ENCODE measurements at regions of chr1 and their contacts with region 1.

Region 1: DNA sequence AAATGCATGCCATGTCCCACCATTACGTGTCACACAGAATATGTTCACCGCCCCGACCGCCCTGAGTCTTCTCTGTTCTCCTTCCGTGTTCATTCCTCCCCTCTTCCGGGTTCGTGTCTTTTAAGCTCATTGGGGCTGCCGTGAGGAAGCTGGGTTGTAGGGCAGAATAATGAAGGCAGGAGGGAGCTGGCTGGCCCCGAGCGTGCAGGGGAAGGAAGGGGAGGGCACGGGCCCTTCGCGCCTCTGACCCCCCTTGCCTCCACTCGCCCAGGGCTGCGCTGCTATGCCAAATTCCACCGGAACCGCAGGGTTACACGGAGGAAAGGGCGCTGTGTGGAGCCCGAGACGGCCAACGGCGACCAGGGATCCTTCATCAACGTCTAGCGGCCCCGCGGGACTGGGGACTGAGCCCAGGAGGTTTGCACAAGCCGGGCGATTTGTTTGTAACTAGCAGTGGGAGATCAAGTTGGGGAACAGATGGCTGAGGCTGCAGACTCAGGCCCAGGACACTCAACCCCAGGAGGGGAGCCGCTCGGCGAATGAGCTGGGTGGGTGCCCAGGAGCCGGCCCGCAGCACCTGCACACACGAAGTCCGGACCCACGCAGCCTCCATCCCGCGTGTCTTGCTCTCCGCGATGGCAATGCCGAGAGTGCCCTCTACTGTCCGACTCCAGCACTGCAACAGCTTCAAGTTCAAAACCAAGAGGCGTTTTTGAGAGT is 16.5 kb upstream of the AGTRAP start:
- DNase-seq: peak; percentile 84 to 89 (median 85)
- H3K4me3 ChIP-seq: peak overlapping the region; percentile 32 to 68 (median 45)
- H3K4me3 Mint-ChIP-seq: peak overlapping the region; percentile 81 to 89
- H3K27ac ChIP-seq: peak overlapping the region; percentile 76 to 84
- H3K27ac Mint-ChIP-seq: peak overlapping the region; percentile 91 to 96 (median 95)
- H3K4me1 ChIP-seq: peaks cover 33 to 41% of the 10 kb centered on the region in 2 donors
- H3K4me1 Mint-ChIP-seq: peaks cover 42% of the 10 kb centered on the region
- H3K27me3 ChIP-seq: no peaks in the 10 kb centered on the region
- H3K27me3 Mint-ChIP-seq: peaks cover 2 to 4% (median 4%) of the 10 kb centered on the region in 3 donors
- CTCF ChIP-seq: peak; percentile 98

Region 2: GRCh38 chr1:11661103-11661502 is 58.4 kb before region 1 on chr1:
- intact Hi-C with region 1: loop called in 1 of 2 experiments (anchors 5 kb)
- DNase-seq: no peak
- H3K4me3 ChIP-seq: no peak overlapping the region
- H3K4me3 Mint-ChIP-seq: no peak overlapping the region
- H3K27ac ChIP-seq: no peak overlapping the region
- H3K27ac Mint-ChIP-seq: no peak overlapping the region
- H3K4me1 ChIP-seq: peaks cover 15 to 25% of the 10 kb centered on the region in 2 donors
- H3K4me1 Mint-ChIP-seq: peaks cover 16% of the 10 kb centered on the region
- H3K27me3 ChIP-seq: no peaks in the 10 kb centered on the region
- H3K27me3 Mint-ChIP-seq: peaks cover 6 to 11% (median 7%) of the 10 kb centered on the region in 3 donors
- CTCF ChIP-seq: no peak

Region 3: GRCh38 chr1:11671544-11672286 is 47.8 kb before region 1 on chr1:
- intact Hi-C with region 1: loop called in 1 of 2 experiments (anchors 5 kb)
- DNase-seq: peak in 1 of 3 donors; percentile 27
- H3K4me3 ChIP-seq: no peak overlapping the region
- H3K4me3 Mint-ChIP-seq: no peak overlapping the region
- H3K27ac ChIP-seq: peak overlapping the region; percentile 35 to 70
- H3K27ac Mint-ChIP-seq: peak overlapping the region in 1 of 7 donors; percentile 33
- H3K4me1 ChIP-seq: peaks cover 18 to 20% of the 10 kb centered on the region in 2 donors
- H3K4me1 Mint-ChIP-seq: peaks cover 15% of the 10 kb centered on the region
- H3K27me3 ChIP-seq: no peaks in the 10 kb centered on the region
- H3K27me3 Mint-ChIP-seq: no peaks in the 10 kb centered on the region
- CTCF ChIP-seq: no peak

Region 4: GRCh38 chr1:11990303-11991032 is 271.0 kb after region 1 on chr1:
- intact Hi-C with region 1: no loop called
- DNase-seq: no peak
- H3K4me3 ChIP-seq: no peak overlapping the region
- H3K4me3 Mint-ChIP-seq: no peak overlapping the region
- H3K27ac ChIP-seq: peak overlapping the region in 1 of 2 donors; percentile 31
- H3K27ac Mint-ChIP-seq: peak overlapping the region in 5 of 7 donors; percentile 11 to 54 (median 52)
- H3K4me1 ChIP-seq: peaks cover 15 to 16% of the 10 kb centered on the region in 2 donors
- H3K4me1 Mint-ChIP-seq: peaks cover 13% of the 10 kb centered on the region
- H3K27me3 ChIP-seq: no peaks in the 10 kb centered on the region
- H3K27me3 Mint-ChIP-seq: peaks cover 0 to 5% (median 0%) of the 10 kb centered on the region in 3 donors
- CTCF ChIP-seq: no peak

Measured in CD14-positive monocyte (primary cell).